ENCODE measurements at regions of chr16 and their contacts with region 1.

Region 1: DNA sequence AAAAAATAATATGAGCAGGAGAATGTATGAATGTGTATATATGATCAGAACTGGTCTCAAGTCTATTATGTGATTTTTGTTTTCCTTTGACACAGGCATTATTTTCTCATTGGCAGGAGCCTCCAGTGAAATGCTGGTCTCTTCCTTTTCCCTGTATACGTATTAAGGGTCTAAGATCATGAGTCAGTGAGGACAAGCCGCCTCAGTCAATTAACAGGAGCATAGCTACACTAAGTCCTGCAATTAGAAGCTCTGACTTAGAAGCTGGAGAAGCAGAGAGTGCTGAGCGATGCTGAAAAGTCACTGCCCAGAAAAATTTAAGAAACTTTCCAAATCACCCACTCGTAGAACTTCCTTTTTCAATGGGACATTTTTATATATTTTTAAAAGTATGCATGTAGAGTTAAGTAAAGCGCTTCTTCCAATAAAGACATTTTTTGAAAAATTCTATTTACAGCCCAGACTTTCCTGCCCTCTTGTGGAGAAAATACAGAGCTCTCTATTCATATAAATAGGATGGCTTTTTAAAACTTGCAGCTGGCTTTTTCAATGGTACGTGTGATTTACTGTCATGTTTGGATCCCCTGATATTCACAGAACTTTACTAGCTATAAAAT is 70.2 kb upstream of the PSMD7 start:
- DNase-seq: no peak
- ATAC-seq: peak; percentile 52 to 71 (median 56)
- H3K4me3 ChIP-seq: no peak overlapping the region
- H3K27ac ChIP-seq: no peak overlapping the region
- H3K4me1 ChIP-seq: no peaks in the 10 kb centered on the region
- H3K27me3 ChIP-seq: no peaks in the 10 kb centered on the region
- CTCF ChIP-seq: peak; percentile 57 to 75 (median 66)
- POLR2A ChIP-seq: no peak

Region 2: GRCh38 chr16:74064120-74064735 is 162.2 kb before region 1 on chr16:
- intact Hi-C with region 1: loop called in 1 of 2 experiments (anchors 10 kb)
- DNase-seq: no peak
- ATAC-seq: peak; percentile 42 to 82 (median 50)
- H3K4me3 ChIP-seq: no peak overlapping the region
- H3K27ac ChIP-seq: no peak overlapping the region
- H3K4me1 ChIP-seq: no peaks in the 10 kb centered on the region
- H3K27me3 ChIP-seq: peaks cover 0 to 5% of the 10 kb centered on the region in 2 donors
- CTCF ChIP-seq: peak; percentile 23 to 48 (median 39)
- POLR2A ChIP-seq: no peak

Region 3: DNA sequence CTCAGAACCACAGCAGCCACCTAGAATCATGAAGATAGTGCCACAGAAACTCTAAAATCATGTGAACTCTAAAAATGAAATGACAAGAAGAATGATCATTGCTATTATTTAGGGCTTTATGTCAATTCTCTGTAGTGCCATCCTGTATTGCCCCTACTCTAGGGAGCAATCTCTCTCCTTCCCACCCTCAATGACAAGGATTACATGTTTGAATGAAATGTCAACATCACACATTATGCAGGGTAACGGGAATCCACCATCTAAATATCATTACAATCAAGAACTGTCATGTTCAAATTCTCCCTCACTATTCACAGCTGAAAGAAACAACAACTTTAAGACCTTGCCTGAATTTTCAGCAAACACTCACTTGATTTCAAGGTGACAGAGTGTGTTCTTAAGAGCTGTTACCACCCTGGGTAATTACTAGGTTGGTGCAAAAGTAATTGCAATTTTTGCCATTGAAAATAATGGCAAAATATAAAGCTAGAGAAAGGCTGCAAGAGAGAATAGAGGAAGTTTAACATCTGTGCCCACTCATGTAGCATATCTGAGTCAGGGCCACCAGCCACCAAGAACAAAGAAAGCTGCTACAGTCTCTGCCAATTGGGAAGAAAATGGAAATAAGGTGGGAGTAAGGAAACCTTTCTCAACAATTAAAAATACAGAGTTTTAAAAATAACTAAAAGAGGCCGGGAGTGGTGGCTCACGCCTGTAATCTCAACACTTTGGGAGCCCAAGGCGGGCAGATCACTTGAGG is 42.7 kb before region 1 on chr16:
- intact Hi-C with region 1: no loop called
- DNase-seq: no peak
- ATAC-seq: no peak
- H3K4me3 ChIP-seq: no peak overlapping the region
- H3K27ac ChIP-seq: no peak overlapping the region
- H3K4me1 ChIP-seq: no peaks in the 10 kb centered on the region
- H3K27me3 ChIP-seq: no peaks in the 10 kb centered on the region
- CTCF ChIP-seq: no peak
- POLR2A ChIP-seq: no peak